Pancreas (tissue), 10 donors: ENCODE measurements at regions of chr15 and their contacts with region 1.

Region 1: DNA sequence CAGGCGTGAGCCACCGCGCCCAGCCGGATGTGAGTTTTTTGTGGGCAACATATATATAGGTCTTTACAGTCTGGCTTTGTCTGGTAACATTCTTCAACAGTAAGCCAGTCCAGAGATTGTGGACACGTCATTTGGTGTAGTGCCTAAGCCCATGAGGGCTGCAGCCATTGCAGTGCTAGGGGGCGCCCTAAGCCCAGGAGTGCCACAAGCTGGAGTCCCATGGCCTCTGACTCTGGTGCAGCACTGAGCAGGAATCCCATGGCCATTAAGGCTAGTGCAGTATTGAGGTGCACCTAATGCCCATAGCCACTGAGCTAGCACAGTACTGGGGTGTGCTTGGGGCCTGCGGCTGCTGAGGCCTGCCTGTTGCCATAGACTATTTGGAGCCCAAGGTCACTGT is 136.4 kb upstream of the NDN start:
- DNase-seq: no peak
- ATAC-seq: no peak
- H3K4me3 ChIP-seq: no peak overlapping the region
- H3K27ac ChIP-seq: no peak overlapping the region
- H3K4me1 ChIP-seq: no peaks in the 10 kb centered on the region
- H3K27me3 ChIP-seq: peaks cover 0 to 4% (median 0%) of the 10 kb centered on the region in 4 donors
- CTCF ChIP-seq: no peak

Region 2: GRCh38 chr15:23760024-23760423 is 63.5 kb before region 1 on chr15:
- intact Hi-C with region 1: loop called in 1 of 3 experiments (anchors 10 kb)
- DNase-seq: no peak
- ATAC-seq: no peak
- H3K4me3 ChIP-seq: no peak overlapping the region
- H3K27ac ChIP-seq: no peak overlapping the region
- H3K4me1 ChIP-seq: no peaks in the 10 kb centered on the region
- H3K27me3 ChIP-seq: no peaks in the 10 kb centered on the region
- CTCF ChIP-seq: no peak